GM12878 (cell line): ENCODE measurements at regions of chr9 and their contacts with region 1.

Region 1: DNA sequence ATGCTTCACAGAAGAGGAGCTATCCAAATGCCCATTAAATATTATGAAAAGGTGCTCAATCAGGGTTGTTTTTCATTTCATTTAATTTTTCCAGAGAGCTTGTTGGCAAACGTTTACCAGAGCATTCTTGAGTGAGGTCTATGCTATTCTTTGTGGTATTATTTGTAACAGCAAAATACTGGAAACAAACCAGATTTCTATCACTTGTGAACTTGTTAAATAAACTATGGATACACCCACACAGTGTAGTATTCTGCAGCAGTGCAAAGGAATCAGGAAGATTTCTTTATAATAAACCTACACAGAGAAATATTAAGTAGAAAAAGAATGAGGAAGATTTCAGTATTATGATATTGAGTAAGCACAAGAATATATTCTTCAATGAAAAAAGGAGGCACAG is 15.0 kb upstream of the SLC1A1 start:
- DNase-seq: no peak
- ATAC-seq: no peak
- H3K4me3 ChIP-seq: no peak overlapping the region
- H3K27ac ChIP-seq: no peak overlapping the region
- H3K4me1 ChIP-seq: no peaks in the 10 kb centered on the region
- H3K27me3 ChIP-seq: no peaks in the 10 kb centered on the region
- CTCF ChIP-seq: no peak
- EP300 ChIP-seq: no peak
- POLR2A ChIP-seq: no peak
- RAD21 ChIP-seq: no peak

Region 2: DNA sequence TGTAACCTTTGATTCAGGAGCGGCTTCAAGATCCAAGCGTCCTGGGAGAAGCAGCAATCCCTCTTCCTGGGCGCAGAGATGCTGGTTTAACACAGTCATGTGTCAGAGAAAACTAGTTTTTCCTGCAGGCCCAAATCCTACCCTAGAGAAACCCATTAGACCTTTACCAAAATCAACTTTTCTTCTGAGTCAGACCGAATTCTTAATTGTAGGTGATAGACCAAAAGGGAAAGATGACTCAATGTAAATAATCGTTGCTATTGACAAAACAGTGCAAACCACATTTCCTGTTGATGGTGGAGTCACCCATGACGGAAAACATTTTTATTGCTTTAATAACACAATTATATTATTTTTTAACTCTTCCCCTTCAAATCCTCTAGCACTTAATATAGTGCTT is 55.1 kb after region 1 on chr9:
- CTCF ChIA-PET with region 1: no interaction called
- POLR2A ChIA-PET with region 1: no interaction called
- RAD21 ChIA-PET with region 1: no interaction called
- SMC1A ChIA-PET with region 1: no interaction called
- in situ Hi-C with region 1: loop called (anchors 5 kb)
- intact Hi-C with region 1: no loop called
- DNase-seq: peak; percentile 57
- ATAC-seq: peak; percentile 98
- H3K4me3 ChIP-seq: no peak overlapping the region
- H3K27ac ChIP-seq: no peak overlapping the region
- H3K4me1 ChIP-seq: peaks cover 7% of the 10 kb centered on the region
- H3K27me3 ChIP-seq: no peaks in the 10 kb centered on the region
- CTCF ChIP-seq: no peak
- EP300 ChIP-seq: peak; percentile 66 to 91; a peak in 2 of 4 replicates
- POLR2A ChIP-seq: no peak
- RAD21 ChIP-seq: no peak